ENCODE measurements at regions of chr1 and their contacts with region 1.

Region 1: GRCh38 chr1:161201828-161202725 is at the start of gene NDUFS2:
- ATAC-seq: peak; percentile 36 to 96 (median 92)
- H3K4me3 ChIP-seq: peak within 1 kb of the TSS; percentile 72 to 94 (median 79)
- H3K27ac ChIP-seq: peak within 1 kb of the TSS; percentile 92 to 96
- H3K4me1 ChIP-seq: peaks cover 26 to 33% of the 10 kb centered on the region in 2 donors
- total RNA-seq, gene NDUFS2: 87.8 to 151 (median 125) TPM

Region 2: GRCh38 chr1:161115132-161115711 is 86.9 kb before region 1 on chr1:
- in situ Hi-C with region 1: no loop called
- ATAC-seq: peak in 4 of 8 experiments; percentile 15 to 32 (median 20)
- H3K4me3 ChIP-seq: no peak overlapping the region
- H3K27ac ChIP-seq: no peak overlapping the region
- H3K4me1 ChIP-seq: peaks cover 24 to 26% of the 10 kb centered on the region in 2 donors

Region 3: GRCh38 chr1:161389691-161390558 is 187.8 kb after region 1 on chr1:
- in situ Hi-C with region 1: loop called in 5 of 9 experiments (anchors 10 to 25 kb)
- ATAC-seq: peak; percentile 89 to 95 (median 93)
- H3K4me3 ChIP-seq: peak overlapping the region; percentile 52 to 90 (median 69)
- H3K27ac ChIP-seq: peak overlapping the region; percentile 73 to 85
- H3K4me1 ChIP-seq: peaks cover 3 to 6% of the 10 kb centered on the region in 2 donors

Region 4: GRCh38 chr1:161399257-161399998 is 197.4 kb after region 1 on chr1:
- in situ Hi-C with region 1: loop called in 4 of 9 experiments (anchors 25 kb)
- ATAC-seq: peak; percentile 78 to 88 (median 86)
- H3K4me3 ChIP-seq: peak overlapping the region; percentile 73 to 96 (median 76)
- H3K27ac ChIP-seq: peak overlapping the region; percentile 89 to 97
- H3K4me1 ChIP-seq: peaks cover 5% of the 10 kb centered on the region in 2 donors

Region 5: GRCh38 chr1:161749509-161750407 is 547.7 kb after region 1 on chr1 and contains the start of gene DUSP12:
- in situ Hi-C with region 1: loop called in 2 of 9 experiments (anchors 25 kb)
- ATAC-seq: peak; percentile 90 to 96 (median 93)
- H3K4me3 ChIP-seq: peak within 1 kb of the TSS; percentile 80 to 96 (median 90)
- H3K27ac ChIP-seq: peak within 1 kb of the TSS; percentile 95 to 97
- H3K4me1 ChIP-seq: peaks cover 11 to 17% of the 10 kb centered on the region in 2 donors
- total RNA-seq, gene DUSP12: 22.8 to 100 (median 66.8) TPM

Measured in motor neuron (in vitro differentiated cells).